Endothelial cell of umbilical vein (primary cell): ENCODE measurements at regions of chr11 and their contacts with region 1.

Region 1: GRCh38 chr11:74570266-74571061 is 21.9 kb upstream of the POLD3 start:
- DNase-seq: peak; percentile 71
- H3K4me3 ChIP-seq: no peak overlapping the region
- H3K27ac ChIP-seq: no peak overlapping the region
- H3K4me1 ChIP-seq: no peaks in the 10 kb centered on the region
- H3K27me3 ChIP-seq: peaks cover 4 to 9% of the 10 kb centered on the region in 2 experiments
- CTCF ChIP-seq: peak; percentile 56 to 74
- POLR2A ChIP-seq: no peak

Region 2: DNA sequence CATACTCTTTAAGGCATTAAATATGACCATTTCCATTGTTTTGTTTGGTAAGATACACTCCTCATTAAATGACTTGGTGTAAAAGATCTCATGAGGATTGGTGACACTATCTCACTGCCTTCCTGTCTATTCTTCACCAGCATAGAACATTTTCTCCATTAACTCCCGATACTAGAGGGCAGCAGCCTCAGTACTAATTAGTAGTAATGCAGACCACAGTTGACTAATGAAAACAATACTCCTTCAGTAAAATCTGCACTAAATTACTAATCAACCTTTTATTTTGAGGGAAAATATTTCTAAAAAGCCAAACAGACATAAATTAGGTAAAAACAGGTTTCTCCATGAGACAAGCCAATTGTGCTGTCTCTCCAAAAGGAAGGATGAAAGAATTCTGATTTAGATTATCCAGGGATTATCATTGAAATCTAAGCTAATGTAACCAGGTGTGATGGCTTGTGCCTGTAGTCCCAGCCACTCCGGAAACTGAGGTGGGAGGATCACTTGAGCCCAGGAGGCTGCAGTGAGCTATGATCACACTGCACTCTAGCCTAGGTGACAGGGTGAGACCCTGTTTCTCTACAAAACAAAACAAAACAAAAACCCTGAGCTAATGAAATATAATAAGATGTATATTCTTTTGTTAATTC is 181.7 kb before region 1 on chr11:
- CTCF ChIA-PET with region 1: interaction called, 19 read pairs
- POLR2A ChIA-PET with region 1: no interaction called
- dilution Hi-C with region 1: no loop called
- intact Hi-C with region 1: loop called (anchors 2 kb)
- DNase-seq: peak; percentile 70
- H3K4me3 ChIP-seq: no peak overlapping the region
- H3K27ac ChIP-seq: peak overlapping the region; percentile 17
- H3K4me1 ChIP-seq: peaks cover 5% of the 10 kb centered on the region
- H3K27me3 ChIP-seq: no peaks in the 10 kb centered on the region
- CTCF ChIP-seq: peak; percentile 37 to 57
- POLR2A ChIP-seq: no peak

Region 3: GRCh38 chr11:74462009-74462408 is 108.5 kb before region 1 on chr11:
- CTCF ChIA-PET with region 1: interaction called, 10 read pairs
- POLR2A ChIA-PET with region 1: no interaction called
- dilution Hi-C with region 1: no loop called
- intact Hi-C with region 1: no loop called
- DNase-seq: no peak
- H3K4me3 ChIP-seq: no peak overlapping the region
- H3K27ac ChIP-seq: no peak overlapping the region
- H3K4me1 ChIP-seq: peaks cover 8% of the 10 kb centered on the region
- H3K27me3 ChIP-seq: peaks cover 14 to 23% of the 10 kb centered on the region in 2 experiments
- CTCF ChIP-seq: no peak
- POLR2A ChIP-seq: no peak

Region 4: GRCh38 chr11:74487875-74488274 is 82.6 kb before region 1 on chr11:
- CTCF ChIA-PET with region 1: interaction called, 24 read pairs
- POLR2A ChIA-PET with region 1: no interaction called
- dilution Hi-C with region 1: no loop called
- intact Hi-C with region 1: loop called (anchors 1 kb)
- DNase-seq: no peak
- H3K4me3 ChIP-seq: no peak overlapping the region
- H3K27ac ChIP-seq: no peak overlapping the region
- H3K4me1 ChIP-seq: no peaks in the 10 kb centered on the region
- H3K27me3 ChIP-seq: no peaks in the 10 kb centered on the region
- CTCF ChIP-seq: peak; percentile 11 to 20
- POLR2A ChIP-seq: no peak

Region 5: DNA sequence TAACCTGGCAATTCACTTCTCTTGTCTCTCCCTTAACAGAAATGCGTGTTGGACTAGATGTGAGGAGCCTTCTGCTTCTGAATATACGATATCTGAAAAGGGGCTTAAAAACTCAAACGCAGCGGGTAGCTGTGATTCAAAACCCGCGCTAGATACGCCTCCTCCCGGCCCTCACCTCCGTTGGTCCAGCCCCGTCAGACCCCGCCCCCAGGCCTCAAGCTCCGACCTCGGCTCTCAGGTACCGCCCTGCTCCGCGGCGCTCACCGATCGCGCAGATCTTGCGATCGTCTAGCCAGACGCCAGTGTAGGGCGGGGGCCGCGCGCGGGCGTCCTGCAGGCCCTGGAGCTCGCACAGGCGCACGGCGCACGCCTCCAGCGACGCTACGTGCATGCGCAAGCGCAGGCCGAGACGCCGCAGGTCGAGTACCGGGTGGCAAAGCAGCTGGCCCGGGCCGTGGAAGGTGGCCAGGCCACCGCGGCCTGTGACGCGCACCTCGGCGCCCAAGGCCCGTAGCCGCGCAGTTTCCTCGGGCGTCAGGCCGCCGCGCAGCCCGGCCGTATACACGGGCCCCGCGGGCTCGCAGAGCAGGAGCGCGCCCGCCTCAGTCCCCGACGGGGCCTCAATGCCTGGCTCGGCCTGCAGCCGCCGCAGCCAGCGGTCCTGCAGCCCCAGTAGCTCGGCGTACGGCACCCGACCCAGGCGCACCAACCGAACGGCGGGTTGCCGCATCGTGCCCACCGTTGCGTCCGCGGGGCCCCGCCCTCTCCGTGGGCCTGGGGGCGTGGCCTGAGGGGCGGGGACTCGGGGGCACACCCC is 77.3 kb before region 1 on chr11 and contains the start of gene LIPT2:
- CTCF ChIA-PET with region 1: interaction called, 24 read pairs
- POLR2A ChIA-PET with region 1: no interaction called
- dilution Hi-C with region 1: no loop called
- intact Hi-C with region 1: loop called (anchors 1 kb)
- DNase-seq: peak; percentile 98
- H3K4me3 ChIP-seq: peak within 1 kb of the TSS; percentile 4 to 69 (median 52)
- H3K27ac ChIP-seq: peak within 1 kb of the TSS; percentile 14
- H3K4me1 ChIP-seq: peaks cover 4% of the 10 kb centered on the region
- H3K27me3 ChIP-seq: peaks cover 3 to 7% of the 10 kb centered on the region in 2 experiments
- CTCF ChIP-seq: no peak
- POLR2A ChIP-seq: peak; percentile 85
- total RNA-seq, gene LIPT2: 1.7 and 3.2 TPM in 2 replicates

Region 6: GRCh38 chr11:74581954-74582547 is 11.6 kb after region 1 on chr11:
- CTCF ChIA-PET with region 1: interaction called, 17 read pairs
- POLR2A ChIA-PET with region 1: no interaction called
- dilution Hi-C with region 1: no loop called
- intact Hi-C with region 1: no loop called
- DNase-seq: no peak
- H3K4me3 ChIP-seq: no peak overlapping the region
- H3K27ac ChIP-seq: no peak overlapping the region
- H3K4me1 ChIP-seq: no peaks in the 10 kb centered on the region
- H3K27me3 ChIP-seq: peaks cover 0 to 6% of the 10 kb centered on the region in 2 experiments
- CTCF ChIP-seq: no peak
- POLR2A ChIP-seq: no peak

Region 7: GRCh38 chr11:74662487-74663103 is 92.1 kb after region 1 on chr11:
- CTCF ChIA-PET with region 1: no interaction called
- POLR2A ChIA-PET with region 1: no interaction called
- dilution Hi-C with region 1: no loop called
- intact Hi-C with region 1: no loop called
- DNase-seq: no peak
- H3K4me3 ChIP-seq: no peak overlapping the region
- H3K27ac ChIP-seq: no peak overlapping the region
- H3K4me1 ChIP-seq: no peaks in the 10 kb centered on the region
- H3K27me3 ChIP-seq: no peaks in the 10 kb centered on the region
- CTCF ChIP-seq: no peak
- POLR2A ChIP-seq: no peak